ENCODE measurements at regions of chr4 and their contacts with region 1.

Region 1: GRCh38 chr4:72814241-72814640 is 245.2 kb upstream of the ADAMTS3 start:
- DNase-seq: no peak
- ATAC-seq: no peak
- H3K4me3 ChIP-seq: no peak overlapping the region
- H3K27ac ChIP-seq: no peak overlapping the region
- H3K4me1 ChIP-seq: no peaks in the 10 kb centered on the region
- H3K27me3 ChIP-seq: no peaks in the 10 kb centered on the region
- CTCF ChIP-seq: no peak
- EP300 ChIP-seq: no peak
- POLR2A ChIP-seq: no peak
- RAD21 ChIP-seq: no peak

Region 2: DNA sequence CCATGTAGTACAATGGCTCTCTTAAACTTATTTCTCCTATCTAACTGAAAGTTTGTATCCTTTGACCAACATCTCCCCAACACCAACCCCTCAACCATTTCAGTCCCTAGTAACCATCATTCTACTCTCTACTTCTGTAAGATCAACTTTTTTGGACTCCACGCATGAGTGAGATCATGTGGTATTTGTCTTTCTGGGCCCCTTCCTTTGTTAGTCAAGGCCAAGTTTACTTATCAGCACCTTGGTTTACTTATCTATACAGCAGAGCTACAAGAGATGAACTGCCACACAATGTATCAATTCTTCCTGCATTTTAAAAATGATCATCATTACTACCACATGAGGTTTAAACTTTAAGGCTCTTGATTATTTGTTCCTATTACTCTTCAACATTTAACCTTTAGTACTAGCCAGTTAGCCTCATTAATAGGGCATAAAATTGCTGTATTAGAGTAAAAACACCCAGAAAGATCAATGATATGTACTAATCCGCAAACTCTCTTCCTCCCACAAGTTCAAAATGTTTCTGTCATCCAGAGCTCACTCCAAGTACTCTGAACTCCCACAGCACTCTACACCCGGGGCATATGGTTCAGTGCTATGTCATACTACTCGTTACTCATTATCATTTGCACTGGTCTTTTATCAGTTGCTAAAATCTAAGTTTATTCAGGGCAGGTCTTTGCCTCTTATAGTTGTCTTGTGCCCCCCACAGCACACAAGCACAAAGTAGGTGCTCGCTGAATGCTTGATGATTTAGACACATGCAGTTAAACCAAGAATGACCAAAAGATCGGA is 99.6 kb before region 1 on chr4:
- CTCF ChIA-PET with region 1: no interaction called
- POLR2A ChIA-PET with region 1: no interaction called
- in situ Hi-C with region 1: no loop called
- intact Hi-C with region 1: loop called (anchors 5 kb)
- DNase-seq: no peak
- ATAC-seq: peak; percentile 57
- H3K4me3 ChIP-seq: no peak overlapping the region
- H3K27ac ChIP-seq: peak overlapping the region; percentile 4; the same call in 1 of the 3 replicates
- H3K4me1 ChIP-seq: peaks cover 0 to 9% of the 10 kb centered on the region in 2 experiments; a peak in 2 of 5 replicates
- H3K27me3 ChIP-seq: no peaks in the 10 kb centered on the region
- CTCF ChIP-seq: no peak
- EP300 ChIP-seq: no peak
- POLR2A ChIP-seq: no peak
- RAD21 ChIP-seq: no peak

Measured in K562 (cell line).